Mammary epithelial cell (primary cell): ENCODE measurements at regions of chr16 and their contacts with region 1.

Region 1: GRCh38 chr16:67883872-67884261 is 818 bp upstream of the NRN1L start:
- DNase-seq: peak; percentile 39
- H3K4me3 ChIP-seq: no peak overlapping the region
- H3K27ac ChIP-seq: no peak overlapping the region
- H3K4me1 ChIP-seq: peaks cover 14% of the 10 kb centered on the region
- H3K27me3 ChIP-seq: no peaks in the 10 kb centered on the region
- CTCF ChIP-seq: peak; percentile 75 to 93

Region 2: DNA sequence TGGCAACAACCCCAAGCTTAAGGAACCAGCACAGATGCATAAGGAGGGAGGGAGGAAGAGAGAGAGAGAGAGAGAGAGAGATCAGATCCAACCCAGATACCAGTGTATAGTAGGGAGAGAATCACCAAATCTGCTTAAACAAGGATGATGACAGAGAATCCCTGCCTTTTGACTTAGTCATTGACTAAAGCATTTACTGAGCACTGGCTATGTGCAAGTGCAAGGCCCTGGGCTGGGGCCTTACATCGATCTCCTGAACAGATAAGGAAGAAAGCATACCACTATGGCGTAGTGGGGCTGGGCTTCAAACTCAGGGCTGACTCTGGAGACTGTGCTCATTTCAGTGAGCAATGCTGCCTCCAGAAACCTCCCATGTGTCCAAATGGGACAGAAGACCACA is 61.4 kb before region 1 on chr16:
- CTCF ChIA-PET with region 1: no interaction called
- dilution Hi-C with region 1: loop called (anchors 5 kb)
- in situ Hi-C with region 1: no loop called
- intact Hi-C with region 1: no loop called
- DNase-seq: no peak
- H3K4me3 ChIP-seq: no peak overlapping the region
- H3K27ac ChIP-seq: no peak overlapping the region
- H3K4me1 ChIP-seq: no peaks in the 10 kb centered on the region
- H3K27me3 ChIP-seq: no peaks in the 10 kb centered on the region
- CTCF ChIP-seq: no peak

Region 3: DNA sequence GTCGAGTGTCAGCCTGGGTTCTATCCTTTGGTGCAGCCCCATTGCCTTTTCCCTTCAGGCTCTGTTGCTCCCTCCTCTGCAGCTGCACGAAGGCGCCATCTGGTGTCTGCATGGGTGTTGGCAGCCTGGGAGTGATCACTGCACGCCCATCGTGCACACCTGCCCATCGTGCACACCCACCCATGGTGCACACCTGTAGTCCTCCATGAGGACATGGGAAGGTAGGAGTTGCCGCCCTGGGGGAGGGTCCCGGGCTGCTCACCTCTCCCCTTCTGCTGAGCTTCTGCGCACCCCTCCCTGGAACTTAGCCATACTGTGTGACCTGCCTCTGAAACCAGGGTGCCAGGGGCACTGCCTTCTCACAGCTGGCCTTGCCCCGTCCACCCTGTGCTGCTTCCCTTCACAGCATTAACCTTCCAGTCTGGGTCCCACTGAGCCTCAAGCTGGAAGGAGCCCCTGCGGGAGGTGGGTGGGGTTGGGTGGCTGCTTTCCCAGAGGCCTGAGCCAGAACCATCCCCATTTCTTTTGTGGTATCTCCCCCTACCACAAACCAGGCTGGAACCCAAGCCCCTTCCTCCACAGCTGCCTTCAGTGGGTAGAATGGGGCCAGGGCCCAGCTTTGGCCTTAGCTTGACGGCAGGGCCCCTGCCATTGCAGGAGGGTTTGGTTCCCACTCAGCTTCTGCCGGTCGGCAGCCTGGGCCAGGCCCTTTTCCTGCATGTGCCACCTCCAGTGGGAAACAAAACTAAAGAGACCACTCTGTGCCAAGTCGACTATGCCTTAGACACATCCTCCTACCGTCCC is 44.9 kb after region 1 on chr16:
- CTCF ChIA-PET with region 1: no interaction called
- dilution Hi-C with region 1: no loop called
- in situ Hi-C with region 1: no loop called
- intact Hi-C with region 1: loop called (anchors 1 kb)
- DNase-seq: peak; percentile 49
- H3K4me3 ChIP-seq: no peak overlapping the region
- H3K27ac ChIP-seq: no peak overlapping the region
- H3K4me1 ChIP-seq: no peaks in the 10 kb centered on the region
- H3K27me3 ChIP-seq: no peaks in the 10 kb centered on the region
- CTCF ChIP-seq: peak; percentile 94 to 95

Region 4: DNA sequence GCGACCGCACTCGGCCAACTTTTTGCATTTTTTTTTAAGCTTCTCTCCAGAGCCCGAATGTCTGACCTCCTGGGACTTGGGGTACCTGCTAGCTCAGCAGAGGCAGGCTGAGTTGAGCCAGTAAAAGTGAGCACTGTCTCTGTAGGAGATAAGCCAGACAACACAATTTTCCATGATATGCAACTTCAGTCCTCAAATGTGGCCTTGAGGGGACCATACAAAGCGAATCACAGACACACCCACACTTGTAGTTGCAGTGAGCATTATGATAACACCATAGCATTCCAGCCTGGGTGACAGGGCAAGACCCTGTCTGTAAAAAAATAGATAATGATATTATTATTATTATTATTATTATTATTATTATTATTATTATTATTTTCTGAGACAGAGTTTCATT is 112.8 kb after region 1 on chr16:
- CTCF ChIA-PET with region 1: no interaction called
- dilution Hi-C with region 1: no loop called
- in situ Hi-C with region 1: no loop called
- intact Hi-C with region 1: no loop called
- DNase-seq: no peak
- H3K4me3 ChIP-seq: no peak overlapping the region
- H3K27ac ChIP-seq: no peak overlapping the region
- H3K4me1 ChIP-seq: peaks cover 8% of the 10 kb centered on the region
- H3K27me3 ChIP-seq: no peaks in the 10 kb centered on the region
- CTCF ChIP-seq: no peak

Region 5: DNA sequence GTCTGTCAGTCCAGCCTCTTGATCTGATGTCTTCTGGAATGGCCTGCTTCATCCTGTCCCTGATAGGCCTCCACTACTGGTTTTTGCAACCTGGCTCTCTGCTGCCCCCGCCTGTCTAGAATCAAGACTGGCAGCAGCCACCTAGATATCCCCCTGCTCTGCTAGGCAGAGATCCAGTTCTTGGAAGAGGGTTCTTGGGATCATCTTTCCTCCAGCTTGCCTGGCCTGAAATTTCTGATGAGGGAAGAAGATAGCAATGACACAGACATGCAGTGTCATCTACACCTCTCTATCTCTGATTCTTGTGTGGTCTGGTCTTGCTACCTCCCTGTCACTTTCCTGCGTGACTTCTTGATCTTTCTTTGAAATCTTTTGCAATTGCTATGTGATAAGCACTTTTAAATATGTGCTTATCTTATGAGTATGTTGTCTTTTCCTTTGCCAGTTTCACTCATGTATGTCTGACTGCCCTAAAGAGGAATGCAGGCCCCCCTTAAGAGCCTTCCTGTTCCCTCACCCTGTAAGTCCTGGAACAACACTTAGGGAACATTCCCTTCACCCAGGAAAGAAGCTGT is 181.0 kb after region 1 on chr16:
- CTCF ChIA-PET with region 1: no interaction called
- dilution Hi-C with region 1: no loop called
- in situ Hi-C with region 1: no loop called
- intact Hi-C with region 1: loop called (anchors 5 kb)
- DNase-seq: peak; percentile 56
- H3K4me3 ChIP-seq: no peak overlapping the region
- H3K27ac ChIP-seq: no peak overlapping the region
- H3K4me1 ChIP-seq: peaks cover 6% of the 10 kb centered on the region
- H3K27me3 ChIP-seq: no peaks in the 10 kb centered on the region
- CTCF ChIP-seq: peak; percentile 88 to 90